ENCODE measurements at regions of chr11 and their contacts with region 1.

Region 1: DNA sequence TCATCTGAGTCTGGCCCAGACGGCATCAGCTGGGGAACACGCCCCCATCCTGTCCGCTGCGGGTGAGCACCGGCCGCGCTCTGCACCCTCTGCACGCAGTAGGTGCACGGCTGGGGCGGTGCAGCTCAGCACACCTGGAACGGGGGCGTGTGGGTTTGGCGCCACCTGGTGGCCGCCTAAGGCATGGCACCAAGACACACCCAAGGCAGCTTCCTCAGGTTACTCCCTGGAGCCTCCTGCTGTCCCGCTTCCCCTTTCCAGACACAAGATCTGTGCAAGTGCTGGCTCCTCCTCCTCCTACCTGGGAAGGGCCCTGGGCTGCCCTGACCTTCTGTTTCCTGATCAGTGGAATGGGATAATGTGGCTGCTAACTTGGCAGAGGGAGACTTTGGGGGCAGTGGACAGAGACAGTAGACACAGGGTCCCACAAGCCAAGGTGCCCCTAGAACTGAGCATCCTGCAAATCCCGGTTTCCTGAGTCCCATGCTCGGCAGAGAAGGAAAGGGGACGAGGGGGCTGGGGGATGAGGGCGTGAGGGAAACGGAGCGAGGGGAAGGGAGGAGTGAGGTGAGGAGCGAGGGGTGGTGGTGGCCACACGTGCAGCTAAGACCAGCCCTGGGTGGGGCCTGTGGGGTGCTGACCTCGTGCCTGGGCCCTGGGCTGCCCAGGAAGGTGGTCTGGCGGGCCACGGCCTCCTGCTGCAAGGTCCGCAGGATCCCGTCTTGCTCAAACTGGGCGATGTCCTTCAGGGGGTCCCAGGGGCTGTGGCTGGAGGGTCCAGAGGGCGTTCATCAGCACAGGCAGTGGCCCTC is 34.8 kb upstream of the CARS1 start:
- H3K4me3 ChIP-seq: no peak overlapping the region
- H3K27ac ChIP-seq: no peak overlapping the region
- H3K4me1 ChIP-seq: no peaks in the 10 kb centered on the region
- CTCF ChIP-seq: peak; percentile 96

Region 2: GRCh38 chr11:2532704-2533586 is 559.1 kb before region 1 on chr11:
- CTCF ChIA-PET with region 1: interaction called, 14 read pairs
- POLR2A ChIA-PET with region 1: no interaction called
- H3K4me3 ChIP-seq: no peak overlapping the region
- H3K27ac ChIP-seq: no peak overlapping the region
- H3K4me1 ChIP-seq: no peaks in the 10 kb centered on the region
- CTCF ChIP-seq: peak; percentile 93

Region 3: GRCh38 chr11:3021125-3021524 is 70.9 kb before region 1 on chr11:
- CTCF ChIA-PET with region 1: interaction called, 12 read pairs
- POLR2A ChIA-PET with region 1: no interaction called
- H3K4me3 ChIP-seq: no peak overlapping the region
- H3K27ac ChIP-seq: no peak overlapping the region
- H3K4me1 ChIP-seq: no peaks in the 10 kb centered on the region
- CTCF ChIP-seq: peak; percentile 14; the same call in 1 of the 2 replicates

Region 4: GRCh38 chr11:3049430-3050243 is 42.4 kb before region 1 on chr11:
- CTCF ChIA-PET with region 1: interaction called, 98 read pairs
- POLR2A ChIA-PET with region 1: interaction called, 4 read pairs
- H3K4me3 ChIP-seq: no peak overlapping the region
- H3K27ac ChIP-seq: peak overlapping the region; percentile 2; the same call in 1 of the 2 replicates
- H3K4me1 ChIP-seq: peaks cover 24% of the 10 kb centered on the region
- CTCF ChIP-seq: 0 out of 2 replicates have a peak, but pooled peaks have one; percentile 22

Region 5: GRCh38 chr11:3069425-3069824 is 22.6 kb before region 1 on chr11:
- CTCF ChIA-PET with region 1: interaction called, 24 read pairs
- POLR2A ChIA-PET with region 1: no interaction called
- H3K4me3 ChIP-seq: no peak overlapping the region
- H3K27ac ChIP-seq: no peak overlapping the region
- H3K4me1 ChIP-seq: no peaks in the 10 kb centered on the region
- CTCF ChIP-seq: no peak

Region 6: GRCh38 chr11:3109921-3110706 is 18.1 kb after region 1 on chr11:
- CTCF ChIA-PET with region 1: interaction called, 14 read pairs
- POLR2A ChIA-PET with region 1: no interaction called
- H3K4me3 ChIP-seq: no peak overlapping the region
- H3K27ac ChIP-seq: no peak overlapping the region
- H3K4me1 ChIP-seq: no peaks in the 10 kb centered on the region
- CTCF ChIP-seq: no peak

Region 7: DNA sequence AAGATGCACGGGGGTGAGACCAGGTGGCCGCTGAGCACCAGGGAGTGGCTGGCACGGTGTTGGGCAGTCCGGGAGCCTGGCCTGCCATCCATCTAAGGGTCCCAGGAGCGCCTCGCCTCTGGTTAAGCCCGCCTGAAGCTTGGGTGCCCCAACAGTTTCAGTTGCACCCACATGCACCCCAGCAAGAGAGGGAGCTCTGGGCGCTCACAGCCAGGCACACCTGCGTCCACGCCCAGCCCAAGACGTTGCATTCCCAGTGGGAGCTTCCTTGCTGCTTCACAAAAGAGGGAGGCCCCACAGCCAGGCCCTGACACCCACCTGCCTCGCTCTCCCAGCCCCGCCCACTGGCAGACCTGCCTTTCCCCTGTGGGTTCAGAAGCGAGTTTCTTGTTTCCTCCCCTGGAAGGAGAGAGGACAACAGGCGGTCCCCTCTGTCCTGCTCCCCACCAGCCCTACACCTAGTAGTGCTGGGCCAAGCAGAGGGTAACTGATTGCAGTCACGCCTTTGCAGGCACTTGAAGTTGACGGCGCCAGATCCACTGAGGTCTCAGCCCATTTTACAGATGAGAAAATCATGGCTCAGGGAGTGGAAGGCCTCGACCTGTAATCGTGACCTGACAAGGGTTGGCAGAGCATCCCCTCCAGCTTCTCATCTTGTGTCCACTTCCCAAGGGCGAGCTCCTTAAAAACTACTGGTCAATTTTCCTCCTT is 37.7 kb after region 1 on chr11:
- CTCF ChIA-PET with region 1: no interaction called
- POLR2A ChIA-PET with region 1: no interaction called
- H3K4me3 ChIP-seq: no peak overlapping the region
- H3K27ac ChIP-seq: no peak overlapping the region
- H3K4me1 ChIP-seq: no peaks in the 10 kb centered on the region
- CTCF ChIP-seq: no peak

Region 8: GRCh38 chr11:3203221-3204043 is 111.4 kb after region 1 on chr11:
- CTCF ChIA-PET with region 1: no interaction called
- POLR2A ChIA-PET with region 1: no interaction called
- H3K4me3 ChIP-seq: no peak overlapping the region
- H3K27ac ChIP-seq: no peak overlapping the region
- H3K4me1 ChIP-seq: no peaks in the 10 kb centered on the region
- CTCF ChIP-seq: no peak

Region 9: GRCh38 chr11:3341298-3341697 is 249.3 kb after region 1 on chr11:
- CTCF ChIA-PET with region 1: no interaction called
- POLR2A ChIA-PET with region 1: no interaction called
- H3K4me3 ChIP-seq: no peak overlapping the region
- H3K27ac ChIP-seq: no peak overlapping the region
- H3K4me1 ChIP-seq: no peaks in the 10 kb centered on the region
- CTCF ChIP-seq: no peak